HCT116 (cell line): ENCODE measurements at regions of chr19 and their contacts with region 1.

Region 1: GRCh38 chr19:588093-588740 is 1.5 kb upstream of the HCN2 start:
- DNase-seq: peak; percentile 69
- ATAC-seq: peak; percentile 80
- H3K4me3 ChIP-seq: peak overlapping the region; percentile 19 to 51
- H3K27ac ChIP-seq: no peak overlapping the region; the same call in 1 of the 2 replicates
- H3K4me1 ChIP-seq: peaks cover 15 to 22% of the 10 kb centered on the region in 2 experiments
- H3K27me3 ChIP-seq: no peaks in the 10 kb centered on the region
- CTCF ChIP-seq: peak; percentile 61 to 74 (median 66); a peak in 5 of 6 replicates
- POLR2A ChIP-seq: no peak
- RAD21 ChIP-seq: peak; percentile 75

Region 2: GRCh38 chr19:632596-633067 is 44.4 kb after region 1 on chr19:
- CTCF ChIA-PET with region 1: no interaction called
- POLR2A ChIA-PET with region 1: no interaction called
- RAD21 ChIA-PET with region 1: no interaction called
- intact Hi-C with region 1: loop called (anchors 1 kb)
- DNase-seq: no peak
- ATAC-seq: peak; percentile 68
- H3K4me3 ChIP-seq: peak overlapping the region; percentile 85 to 97
- H3K27ac ChIP-seq: peak overlapping the region; percentile 83
- H3K4me1 ChIP-seq: peaks cover 8 to 16% of the 10 kb centered on the region in 2 experiments; a peak in 2 of 4 replicates
- H3K27me3 ChIP-seq: no peaks in the 10 kb centered on the region
- CTCF ChIP-seq: no peak
- POLR2A ChIP-seq: peak; percentile 46
- RAD21 ChIP-seq: no peak

Region 3: GRCh38 chr19:737581-738093 is 149.4 kb after region 1 on chr19:
- CTCF ChIA-PET with region 1: interaction called, 3 read pairs
- POLR2A ChIA-PET with region 1: no interaction called
- RAD21 ChIA-PET with region 1: no interaction called
- intact Hi-C with region 1: loop called (anchors 2 kb)
- DNase-seq: no peak
- ATAC-seq: peak; percentile 87
- H3K4me3 ChIP-seq: no peak overlapping the region
- H3K27ac ChIP-seq: no peak overlapping the region
- H3K4me1 ChIP-seq: no peaks in the 10 kb centered on the region
- H3K27me3 ChIP-seq: no peaks in the 10 kb centered on the region
- CTCF ChIP-seq: peak; percentile 51 to 79 (median 66); a peak in 5 of 6 replicates
- POLR2A ChIP-seq: no peak
- RAD21 ChIP-seq: peak; percentile 41; the same call in 1 of the 2 replicates